Naive thymus-derived CD8-positive, alpha-beta T cell (primary cell): ENCODE measurements at regions of chr19 and their contacts with region 1.

Region 1: GRCh38 chr19:16330368-16330801 is 5.8 kb downstream of the KLF2 start:
- DNase-seq: peak; percentile 77 to 96 (median 92)
- ATAC-seq: peak; percentile 59 to 60
- H3K4me3 Mint-ChIP-seq: peak overlapping the region; percentile 71 to 100 (median 99)
- H3K27ac Mint-ChIP-seq: peak overlapping the region; percentile 91 to 100 (median 100)
- H3K4me1 Mint-ChIP-seq: peaks cover 29 to 69% (median 50%) of the 10 kb centered on the region in 4 donors
- H3K27me3 Mint-ChIP-seq: peaks cover 0 to 11% (median 0%) of the 10 kb centered on the region in 5 donors

Region 2: DNA sequence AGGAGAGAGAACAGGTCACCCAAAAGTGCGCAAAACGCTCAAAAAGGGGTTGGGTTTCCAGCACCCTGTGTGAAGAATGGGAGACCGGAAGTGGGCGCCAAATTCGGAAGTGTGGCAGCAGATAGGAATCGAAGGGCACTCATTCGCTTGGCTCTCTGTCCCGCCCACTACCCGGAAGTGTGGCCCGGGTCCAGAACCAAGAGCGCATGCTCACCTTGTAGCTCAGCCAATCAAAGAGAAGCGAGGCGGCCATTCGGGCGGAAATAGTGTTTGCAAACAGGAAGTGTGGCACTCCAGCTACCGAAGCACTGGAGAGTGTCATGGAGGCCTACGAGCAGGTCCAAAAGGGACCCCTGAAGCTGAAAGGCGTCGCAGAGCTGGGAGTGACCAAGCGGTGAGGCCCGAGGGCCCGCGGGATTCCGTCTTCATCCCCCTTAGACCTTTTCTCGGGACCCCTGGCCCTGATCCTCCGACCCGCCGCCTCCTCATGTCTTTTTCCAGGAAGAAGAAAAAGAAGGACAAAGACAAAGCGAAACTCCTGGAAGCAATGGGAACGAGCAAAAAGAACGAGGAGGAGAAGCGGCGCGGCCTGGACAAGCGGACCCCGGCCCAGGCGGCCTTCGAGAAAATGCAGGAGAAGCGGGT is 145.1 kb before region 1 on chr19 and contains the start of gene FAM32A:
- POLR2A ChIA-PET with region 1: interaction called, 24 read pairs
- DNase-seq: peak; percentile 88 to 100 (median 99)
- ATAC-seq: peak; percentile 90 to 91
- H3K4me3 Mint-ChIP-seq: peak within 1 kb of the TSS; percentile 95 to 100 (median 98)
- H3K27ac Mint-ChIP-seq: peak within 1 kb of the TSS; percentile 95 to 99 (median 98)
- H3K4me1 Mint-ChIP-seq: peaks cover 17 to 48% (median 36%) of the 10 kb centered on the region in 4 donors
- H3K27me3 Mint-ChIP-seq: peaks cover 0 to 1% (median 0%) of the 10 kb centered on the region in 5 donors
- polyA plus RNA-seq, gene FAM32A: 150 to 205 (median 183) TPM

Region 3: DNA sequence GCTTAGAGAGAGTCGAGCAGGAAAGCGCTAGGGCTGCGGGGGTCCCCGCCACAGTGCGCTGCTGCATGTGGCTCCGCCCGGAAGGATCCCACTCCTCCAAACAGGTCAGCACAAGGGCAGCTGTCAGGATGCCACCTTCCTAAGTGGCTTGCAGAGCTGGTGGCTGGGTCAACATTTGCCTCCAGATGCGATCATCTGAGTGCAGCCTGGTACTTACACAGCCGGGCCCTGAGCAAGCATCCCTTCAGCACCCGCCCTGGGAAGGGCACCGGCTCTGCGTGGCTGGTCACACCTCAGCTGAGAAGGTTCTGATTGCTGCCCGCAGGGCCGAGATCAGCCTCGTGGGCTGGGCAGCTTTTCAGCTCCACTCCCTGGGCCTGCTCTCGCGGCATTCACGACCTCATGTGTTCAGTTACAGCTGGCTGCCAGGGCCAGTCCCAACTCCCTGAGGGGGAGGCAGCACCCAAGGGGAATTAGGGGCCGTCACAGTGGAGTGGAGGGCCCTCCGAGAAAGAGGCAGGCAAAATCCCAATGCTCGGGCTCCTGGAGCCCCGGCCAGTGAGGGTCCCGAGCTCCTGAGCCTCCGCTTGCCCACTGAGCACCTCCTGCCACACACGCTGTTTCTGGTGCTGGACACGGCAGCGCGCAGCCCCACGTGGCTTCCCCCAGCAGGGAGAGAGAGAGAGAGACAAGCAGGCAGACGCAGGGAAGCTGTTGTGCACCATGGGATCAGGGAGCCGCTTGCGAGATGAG is 105.9 kb before region 1 on chr19:
- POLR2A ChIA-PET with region 1: no interaction called
- DNase-seq: no peak
- ATAC-seq: no peak
- H3K4me3 Mint-ChIP-seq: no peak overlapping the region
- H3K27ac Mint-ChIP-seq: peak overlapping the region in 2 of 10 donors; percentile 65 to 71
- H3K4me1 Mint-ChIP-seq: peaks cover 2 to 10% (median 4%) of the 10 kb centered on the region in 4 donors
- H3K27me3 Mint-ChIP-seq: no peaks in the 10 kb centered on the region

Region 4: GRCh38 chr19:16259385-16260159 is 70.8 kb before region 1 on chr19:
- POLR2A ChIA-PET with region 1: interaction called, 32 read pairs
- DNase-seq: no peak
- ATAC-seq: peak in 1 of 2 donors; percentile 25
- H3K4me3 Mint-ChIP-seq: peak overlapping the region in 3 of 10 donors; percentile 24 to 60 (median 33)
- H3K27ac Mint-ChIP-seq: peak overlapping the region in 4 of 10 donors; percentile 43 to 72 (median 63)
- H3K4me1 Mint-ChIP-seq: peaks cover 22 to 72% (median 56%) of the 10 kb centered on the region in 4 donors
- H3K27me3 Mint-ChIP-seq: no peaks in the 10 kb centered on the region

Region 5: DNA sequence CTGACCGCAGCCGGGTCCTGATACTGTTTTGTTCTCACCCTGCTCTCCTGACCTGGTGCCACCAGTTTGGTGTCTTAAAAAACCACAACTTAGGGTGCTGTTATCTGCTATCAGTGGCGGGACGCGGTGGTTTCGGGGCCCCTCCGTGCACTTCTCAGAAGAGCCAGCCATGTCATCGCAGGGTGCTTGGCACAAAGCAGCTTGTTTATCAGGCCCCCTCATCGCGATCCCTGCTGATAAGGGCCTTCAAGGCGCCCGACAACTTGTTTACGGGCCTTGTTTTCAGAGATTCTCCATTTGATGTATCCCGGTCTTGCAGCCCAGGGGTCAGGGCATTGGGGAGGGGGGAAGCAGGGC is 63.8 kb before region 1 on chr19:
- POLR2A ChIA-PET with region 1: interaction called, 56 read pairs
- DNase-seq: peak; percentile 37 to 78 (median 60)
- ATAC-seq: peak; percentile 72 to 76
- H3K4me3 Mint-ChIP-seq: peak overlapping the region; percentile 34 to 86 (median 68)
- H3K27ac Mint-ChIP-seq: peak overlapping the region; percentile 81 to 97 (median 88)
- H3K4me1 Mint-ChIP-seq: peaks cover 26 to 72% (median 60%) of the 10 kb centered on the region in 4 donors
- H3K27me3 Mint-ChIP-seq: no peaks in the 10 kb centered on the region

Region 6: GRCh38 chr19:16315825-16316505 is 14.4 kb before region 1 on chr19:
- POLR2A ChIA-PET with region 1: interaction called, 19 read pairs
- DNase-seq: no peak
- ATAC-seq: no peak
- H3K4me3 Mint-ChIP-seq: no peak overlapping the region
- H3K27ac Mint-ChIP-seq: peak overlapping the region in 5 of 10 donors; percentile 15 to 87 (median 76)
- H3K4me1 Mint-ChIP-seq: peaks cover 9 to 29% (median 21%) of the 10 kb centered on the region in 4 donors
- H3K27me3 Mint-ChIP-seq: no peaks in the 10 kb centered on the region

Region 7: GRCh38 chr19:16382775-16383543 is 52.6 kb after region 1 on chr19:
- POLR2A ChIA-PET with region 1: interaction called, 4,622 read pairs
- DNase-seq: peak; percentile 66 to 88 (median 76)
- ATAC-seq: peak; percentile 78
- H3K4me3 Mint-ChIP-seq: peak overlapping the region; percentile 43 to 84 (median 72)
- H3K27ac Mint-ChIP-seq: peak overlapping the region in 8 of 10 donors; percentile 90 to 98 (median 98)
- H3K4me1 Mint-ChIP-seq: peaks cover 35 to 61% (median 53%) of the 10 kb centered on the region in 4 donors
- H3K27me3 Mint-ChIP-seq: no peaks in the 10 kb centered on the region

Region 8: GRCh38 chr19:16417660-16418596 is 87.5 kb after region 1 on chr19:
- POLR2A ChIA-PET with region 1: interaction called, 22 read pairs
- DNase-seq: peak; percentile 58 to 84 (median 70)
- ATAC-seq: peak; percentile 97 to 98
- H3K4me3 Mint-ChIP-seq: peak overlapping the region in 1 of 10 donors; percentile 6
- H3K27ac Mint-ChIP-seq: peak overlapping the region in 8 of 10 donors; percentile 2 to 77 (median 62)
- H3K4me1 Mint-ChIP-seq: peaks cover 0 to 25% (median 9%) of the 10 kb centered on the region in 4 donors
- H3K27me3 Mint-ChIP-seq: no peaks in the 10 kb centered on the region